ENCODE measurements at regions of chr10 and their contacts with region 1.

Region 1: DNA sequence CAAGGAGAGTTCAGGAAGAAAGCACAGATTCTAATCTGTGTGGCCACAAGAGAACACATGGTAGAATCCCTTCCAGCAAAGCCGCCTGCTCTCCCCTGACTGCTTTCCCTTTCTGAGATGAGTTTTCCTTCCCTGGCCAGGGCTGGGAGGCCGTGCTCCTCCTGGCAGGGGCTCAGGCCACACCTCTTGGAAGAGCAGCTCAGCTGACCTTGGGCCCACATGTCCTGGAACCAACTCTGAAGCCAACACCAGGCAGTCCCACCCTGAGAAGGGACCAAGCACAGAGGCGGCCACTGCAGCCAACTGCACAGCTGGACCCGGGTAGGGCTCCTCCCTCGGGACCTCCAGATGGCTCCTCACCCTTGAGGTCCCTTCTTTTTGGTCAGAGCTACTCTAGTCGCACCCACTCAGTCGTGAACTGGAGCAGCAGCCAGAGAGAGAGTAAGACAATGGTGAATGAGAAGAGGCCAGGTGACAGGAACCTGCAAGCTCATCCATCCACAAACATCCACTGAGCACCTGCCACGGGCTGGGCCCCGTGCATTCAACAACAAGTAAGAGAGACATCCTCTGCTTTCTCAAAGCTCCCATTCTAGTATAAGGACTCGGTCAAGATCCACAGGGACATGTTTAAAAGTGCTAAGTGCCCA is 40.3 kb downstream of the FAM53B start:
- DNase-seq: peak; percentile 89 to 95
- ATAC-seq: peak; percentile 35 to 52
- H3K4me3 ChIP-seq: peak overlapping the region in 3 of 4 donors; percentile 3 to 28 (median 5)
- H3K27ac ChIP-seq: peak overlapping the region; percentile 93 to 98 (median 96)
- H3K4me1 ChIP-seq: peaks cover 100% of the 10 kb centered on the region in 2 donors
- H3K27me3 ChIP-seq: no peaks in the 10 kb centered on the region
- CTCF ChIP-seq: no peak
- POLR2A ChIP-seq: peak; percentile 73 to 74

Region 2: GRCh38 chr10:124530215-124530665 is 173.7 kb before region 1 on chr10:
- in situ Hi-C with region 1: no loop called
- intact Hi-C with region 1: no loop called
- DNase-seq: peak; percentile 69 to 84
- ATAC-seq: peak; percentile 69
- H3K4me3 ChIP-seq: no peak overlapping the region
- H3K27ac ChIP-seq: no peak overlapping the region
- H3K4me1 ChIP-seq: peaks cover 9 to 11% of the 10 kb centered on the region in 2 donors
- H3K27me3 ChIP-seq: no peaks in the 10 kb centered on the region
- CTCF ChIP-seq: peak; percentile 83 to 93 (median 89)
- POLR2A ChIP-seq: no peak

Region 3: DNA sequence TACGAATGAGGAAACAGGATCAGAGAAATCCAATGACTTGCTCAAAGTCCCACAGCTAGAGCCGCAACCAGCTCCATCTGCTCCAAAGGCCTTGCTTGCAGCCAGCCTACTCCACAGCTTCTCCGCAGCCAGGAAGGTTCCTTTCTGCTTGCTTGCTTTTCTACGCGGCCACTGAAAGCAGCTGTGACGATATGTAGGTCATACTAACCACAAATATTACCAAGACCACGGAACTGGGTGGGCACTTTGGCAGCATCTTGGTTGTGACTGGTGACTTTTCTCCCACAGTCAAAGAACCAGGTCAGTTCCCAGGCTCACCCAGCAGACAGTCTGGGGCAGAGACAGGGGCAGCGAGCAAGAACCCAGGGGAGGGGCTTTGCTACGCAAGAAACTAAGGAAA is 46.1 kb before region 1 on chr10:
- in situ Hi-C with region 1: no loop called
- intact Hi-C with region 1: no loop called
- DNase-seq: no peak
- ATAC-seq: peak in 1 of 2 donors; percentile 35
- H3K4me3 ChIP-seq: no peak overlapping the region
- H3K27ac ChIP-seq: peak overlapping the region; percentile 39 to 76 (median 53)
- H3K4me1 ChIP-seq: peaks cover 42 to 68% of the 10 kb centered on the region in 2 donors
- H3K27me3 ChIP-seq: no peaks in the 10 kb centered on the region
- CTCF ChIP-seq: no peak
- POLR2A ChIP-seq: no peak

Region 4: GRCh38 chr10:124721330-124722045 is 17.6 kb after region 1 on chr10:
- in situ Hi-C with region 1: no loop called
- intact Hi-C with region 1: loop called (anchors 2 kb)
- DNase-seq: peak; percentile 93 to 94
- ATAC-seq: peak; percentile 85 to 87
- H3K4me3 ChIP-seq: no peak overlapping the region
- H3K27ac ChIP-seq: peak overlapping the region; percentile 92 to 97 (median 92)
- H3K4me1 ChIP-seq: peaks cover 97% of the 10 kb centered on the region in 2 donors
- H3K27me3 ChIP-seq: no peaks in the 10 kb centered on the region
- CTCF ChIP-seq: no peak
- POLR2A ChIP-seq: peak; percentile 64 to 75

Region 5: DNA sequence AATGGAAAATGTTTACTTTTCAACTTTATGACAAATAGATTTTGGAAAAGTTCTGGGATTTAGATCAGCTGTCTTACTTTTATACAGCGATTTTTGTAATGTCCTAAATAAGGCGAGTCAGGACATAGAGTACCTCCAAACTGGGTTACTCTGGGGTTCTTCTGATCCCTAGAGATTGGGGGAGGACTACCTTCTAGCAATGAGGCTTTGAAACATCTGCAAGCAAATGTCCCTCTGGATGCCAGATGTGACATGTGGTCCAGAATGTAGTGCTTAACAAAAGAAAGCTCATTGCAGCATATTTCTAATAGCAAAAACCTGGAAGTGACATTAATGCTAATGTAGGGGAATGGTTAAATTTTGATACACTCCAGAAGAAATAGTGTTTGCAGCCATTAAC is 133.8 kb after region 1 on chr10:
- in situ Hi-C with region 1: no loop called
- intact Hi-C with region 1: no loop called
- DNase-seq: no peak
- ATAC-seq: no peak
- H3K4me3 ChIP-seq: no peak overlapping the region
- H3K27ac ChIP-seq: no peak overlapping the region
- H3K4me1 ChIP-seq: no peaks in the 10 kb centered on the region
- H3K27me3 ChIP-seq: no peaks in the 10 kb centered on the region
- CTCF ChIP-seq: no peak
- POLR2A ChIP-seq: no peak

Measured in gastrocnemius medialis (tissue), 4 donors.